ENCODE measurements at regions of chr6 and their contacts with region 1.

Region 1: DNA sequence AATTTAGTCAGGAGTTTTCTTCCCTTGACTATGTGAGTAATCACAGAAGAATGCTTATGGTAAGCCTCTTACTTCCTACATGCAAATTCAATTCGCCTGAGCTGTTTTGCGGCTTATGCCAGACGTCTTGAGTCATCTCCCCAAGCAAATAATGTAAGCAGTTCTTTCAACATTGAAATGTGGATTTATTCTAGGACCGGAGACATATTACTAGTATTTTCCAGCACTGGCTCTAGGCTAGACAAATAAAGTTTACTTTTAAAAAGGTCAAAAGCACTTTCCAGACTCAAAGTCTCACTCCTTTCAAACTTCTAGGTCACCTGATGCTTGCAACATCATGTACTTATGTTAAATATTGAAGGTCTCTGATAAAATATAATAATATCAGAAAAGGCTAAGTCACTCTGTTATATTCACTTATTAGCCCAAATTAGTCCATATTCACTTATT is 38.1 kb upstream of the NOX3 start:
- DNase-seq: peak; percentile 98
- H3K4me3 ChIP-seq: no peak overlapping the region
- H3K27ac ChIP-seq: peak overlapping the region; percentile 75
- H3K4me1 ChIP-seq: peaks cover 35% of the 10 kb centered on the region
- H3K27me3 ChIP-seq: no peaks in the 10 kb centered on the region

Region 2: GRCh38 chr6:155196911-155197310 is 296.8 kb before region 1 on chr6:
- in situ Hi-C with region 1: no loop called
- DNase-seq: no peak
- H3K4me3 ChIP-seq: no peak overlapping the region
- H3K27ac ChIP-seq: no peak overlapping the region
- H3K4me1 ChIP-seq: peaks cover 7% of the 10 kb centered on the region
- H3K27me3 ChIP-seq: no peaks in the 10 kb centered on the region

Region 3: GRCh38 chr6:155327326-155328073 is 166.2 kb before region 1 on chr6:
- in situ Hi-C with region 1: loop called (anchors 10 kb)
- DNase-seq: peak; percentile 77
- H3K4me3 ChIP-seq: no peak overlapping the region
- H3K27ac ChIP-seq: no peak overlapping the region
- H3K4me1 ChIP-seq: 0 out of 2 replicates have a peak, but pooled peaks cover 6% of the 10 kb centered on the region
- H3K27me3 ChIP-seq: no peaks in the 10 kb centered on the region

Region 4: DNA sequence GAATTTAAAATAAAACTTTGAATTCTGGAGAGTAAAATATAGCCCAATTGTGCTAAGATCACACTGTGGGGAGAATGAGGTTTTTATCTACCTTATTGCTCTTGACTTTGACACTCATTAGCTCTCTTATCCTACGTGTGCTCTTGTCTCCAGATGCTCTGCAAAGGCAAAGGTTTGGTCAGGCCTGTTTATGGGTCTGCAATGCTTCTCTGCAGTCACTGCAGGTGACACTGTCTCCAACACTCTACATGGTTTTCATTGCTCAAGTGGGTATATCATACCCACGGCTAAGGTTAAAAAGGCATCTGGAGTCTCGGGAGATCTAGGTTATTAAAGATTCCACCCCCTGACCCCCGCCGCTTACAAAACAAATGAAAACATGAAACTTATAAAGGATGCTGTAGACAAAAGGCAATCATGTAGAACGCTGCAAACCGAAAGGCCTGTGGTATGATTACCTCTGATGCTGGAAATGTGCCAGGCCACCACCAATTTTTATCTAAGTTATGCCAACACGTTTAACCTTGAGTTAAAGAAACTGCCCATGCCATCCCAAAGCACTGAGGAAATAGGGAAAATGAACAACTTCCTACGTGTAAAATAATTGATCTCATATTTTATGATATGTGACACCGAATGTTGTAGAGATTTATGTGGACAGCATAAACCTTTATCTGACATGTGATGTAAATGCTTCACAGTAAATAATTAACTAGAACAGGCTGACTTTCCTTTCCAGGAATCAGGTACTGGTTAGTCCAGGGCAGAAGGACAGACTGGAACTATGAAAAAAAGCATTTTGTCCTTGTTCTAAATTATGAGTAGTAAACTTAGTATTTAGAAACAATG is 200.1 kb after region 1 on chr6:
- in situ Hi-C with region 1: no loop called
- DNase-seq: no peak
- H3K4me3 ChIP-seq: no peak overlapping the region
- H3K27ac ChIP-seq: no peak overlapping the region
- H3K4me1 ChIP-seq: no peaks in the 10 kb centered on the region
- H3K27me3 ChIP-seq: no peaks in the 10 kb centered on the region

Region 5: DNA sequence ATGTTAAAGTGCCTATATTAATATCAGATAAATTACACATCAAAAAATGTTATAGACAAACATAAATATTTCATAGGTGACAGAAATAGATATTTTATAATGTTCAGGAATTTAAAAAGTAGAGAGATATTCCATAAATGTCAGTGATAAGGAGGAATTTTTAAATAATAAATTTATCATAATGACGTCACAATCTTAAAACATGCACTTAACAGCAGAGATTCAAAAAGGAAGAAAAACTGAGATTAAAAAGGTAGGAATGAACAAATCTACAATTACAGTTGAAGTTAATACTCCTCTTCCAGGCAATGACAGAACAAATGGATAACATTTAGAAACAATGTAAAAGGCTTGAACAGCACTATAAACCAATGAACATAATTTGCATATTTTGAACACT is 307.3 kb after region 1 on chr6:
- in situ Hi-C with region 1: no loop called
- DNase-seq: no peak
- H3K4me3 ChIP-seq: no peak overlapping the region
- H3K27ac ChIP-seq: no peak overlapping the region
- H3K4me1 ChIP-seq: no peaks in the 10 kb centered on the region
- H3K27me3 ChIP-seq: no peaks in the 10 kb centered on the region

Measured in GM23248 (cell line).